Kidney (tissue), 22 donors: ENCODE measurements at regions of chr11 and their contacts with region 1.

Region 1: DNA sequence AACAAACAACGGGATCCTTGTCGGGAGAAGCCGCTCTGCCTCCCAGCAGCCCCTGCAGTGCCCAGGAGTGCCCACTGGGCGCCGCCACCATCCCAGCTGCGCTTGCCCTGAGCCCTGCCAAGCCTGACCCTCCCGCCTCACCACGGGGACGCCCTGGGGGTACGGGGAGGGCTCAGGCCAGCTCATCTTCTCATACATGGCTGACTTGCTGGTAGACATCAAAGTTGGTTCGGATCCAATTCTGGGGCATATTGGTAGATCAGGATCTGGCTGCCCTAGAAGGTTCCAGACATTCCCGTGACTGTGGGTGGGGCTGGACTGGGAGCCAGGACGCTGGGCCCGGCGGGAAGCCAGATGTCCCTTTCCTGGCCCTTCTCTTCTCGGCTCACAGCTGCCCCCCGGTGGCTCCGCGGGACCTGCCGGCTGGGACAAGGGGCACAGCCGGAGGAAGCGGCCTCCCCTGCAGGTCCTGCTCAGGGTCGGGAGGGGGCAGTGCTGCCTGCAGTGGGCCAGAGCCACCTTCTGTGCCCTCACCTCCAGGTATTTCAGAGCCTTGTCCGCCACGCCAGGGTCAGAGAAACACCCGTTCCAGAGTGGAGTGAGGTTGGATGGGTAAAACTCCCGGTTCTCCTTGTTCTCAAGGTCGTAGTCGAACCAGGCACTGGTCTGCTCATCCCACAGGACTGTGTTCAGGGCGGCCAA is 10.6 kb upstream of the TREH start:
- DNase-seq: peak; percentile 84 to 99 (median 94)
- H3K4me3 ChIP-seq: peak overlapping the region; percentile 36 to 60 (median 45)
- H3K27ac ChIP-seq: peak overlapping the region; percentile 80 to 84
- H3K4me1 ChIP-seq: peaks cover 0 to 7% (median 0%) of the 10 kb centered on the region in 3 donors
- H3K27me3 ChIP-seq: no peaks in the 10 kb centered on the region
- CTCF ChIP-seq: peak; percentile 98

Region 2: DNA sequence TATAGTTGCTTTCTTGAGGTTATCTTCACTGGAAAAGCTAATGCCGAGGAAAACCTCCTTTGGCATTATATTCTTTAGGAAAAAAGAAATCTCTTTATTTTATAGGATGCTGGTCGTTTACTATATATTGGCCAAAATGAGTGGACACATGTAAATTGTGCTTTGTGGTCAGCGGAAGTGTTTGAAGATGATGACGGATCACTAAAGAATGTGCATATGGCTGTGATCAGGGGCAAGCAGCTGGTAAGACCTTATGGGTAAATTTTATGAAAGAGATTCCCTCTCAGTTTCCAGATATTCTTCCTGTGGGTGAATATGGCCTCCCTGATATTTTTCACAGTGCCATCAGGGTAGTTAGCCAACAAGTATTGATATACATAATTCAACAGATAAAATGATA is 192.2 kb before region 1 on chr11:
- intact Hi-C with region 1: no loop called
- DNase-seq: no peak
- H3K4me3 ChIP-seq: no peak overlapping the region
- H3K27ac ChIP-seq: no peak overlapping the region
- H3K4me1 ChIP-seq: no peaks in the 10 kb centered on the region
- H3K27me3 ChIP-seq: no peaks in the 10 kb centered on the region
- CTCF ChIP-seq: no peak

Region 3: GRCh38 chr11:118956094-118956846 is 266.3 kb after region 1 on chr11 and contains the start of gene UPK2:
- intact Hi-C with region 1: loop called (anchors 2 kb)
- DNase-seq: peak; percentile 83 to 94 (median 89)
- H3K4me3 ChIP-seq: no peak within 1 kb of the TSS
- H3K27ac ChIP-seq: no peak within 1 kb of the TSS
- H3K4me1 ChIP-seq: no peaks in the 10 kb centered on the region
- H3K27me3 ChIP-seq: no peaks in the 10 kb centered on the region
- CTCF ChIP-seq: peak; percentile 96
- total RNA-seq, gene UPK2: not detected